Endothelial cell of umbilical vein (primary cell): ENCODE measurements at regions of chr1 and their contacts with region 1.

Region 1: GRCh38 chr1:77126307-77126706 is 92.9 kb downstream of the PIGK start:
- DNase-seq: peak; percentile 72
- H3K4me3 ChIP-seq: no peak overlapping the region
- H3K27ac ChIP-seq: no peak overlapping the region
- H3K4me1 ChIP-seq: no peaks in the 10 kb centered on the region
- H3K27me3 ChIP-seq: no peaks in the 10 kb centered on the region
- CTCF ChIP-seq: peak; percentile 37 to 55
- POLR2A ChIP-seq: no peak

Region 2: DNA sequence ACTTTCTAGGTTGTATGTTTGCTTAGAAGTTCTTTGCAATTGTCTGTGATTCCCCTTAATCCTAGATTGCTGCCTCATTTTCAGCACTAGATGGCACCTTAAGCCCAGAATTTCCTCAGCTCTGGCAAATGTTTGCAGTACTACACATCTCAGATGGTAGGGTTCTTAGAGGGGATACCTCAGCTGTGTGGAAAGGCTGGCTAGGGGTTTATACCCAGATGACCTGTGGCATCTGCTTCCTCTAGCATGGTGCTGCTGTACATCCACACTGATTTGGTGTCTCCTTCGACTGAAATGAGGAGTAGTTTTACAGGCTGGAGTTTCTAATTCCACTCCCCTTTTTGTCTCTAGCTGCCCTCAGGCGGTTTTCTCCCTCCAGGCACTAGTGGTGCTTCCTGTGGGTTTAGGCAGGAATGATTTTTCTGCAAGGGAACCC is 1217.6 kb before region 1 on chr1:
- CTCF ChIA-PET with region 1: interaction called, 17 read pairs
- POLR2A ChIA-PET with region 1: no interaction called
- dilution Hi-C with region 1: no loop called
- intact Hi-C with region 1: loop called (anchors 1 kb)
- DNase-seq: peak; percentile 60
- H3K4me3 ChIP-seq: no peak overlapping the region
- H3K27ac ChIP-seq: no peak overlapping the region
- H3K4me1 ChIP-seq: no peaks in the 10 kb centered on the region
- H3K27me3 ChIP-seq: no peaks in the 10 kb centered on the region
- CTCF ChIP-seq: peak; percentile 30 to 45
- POLR2A ChIP-seq: no peak

Region 3: DNA sequence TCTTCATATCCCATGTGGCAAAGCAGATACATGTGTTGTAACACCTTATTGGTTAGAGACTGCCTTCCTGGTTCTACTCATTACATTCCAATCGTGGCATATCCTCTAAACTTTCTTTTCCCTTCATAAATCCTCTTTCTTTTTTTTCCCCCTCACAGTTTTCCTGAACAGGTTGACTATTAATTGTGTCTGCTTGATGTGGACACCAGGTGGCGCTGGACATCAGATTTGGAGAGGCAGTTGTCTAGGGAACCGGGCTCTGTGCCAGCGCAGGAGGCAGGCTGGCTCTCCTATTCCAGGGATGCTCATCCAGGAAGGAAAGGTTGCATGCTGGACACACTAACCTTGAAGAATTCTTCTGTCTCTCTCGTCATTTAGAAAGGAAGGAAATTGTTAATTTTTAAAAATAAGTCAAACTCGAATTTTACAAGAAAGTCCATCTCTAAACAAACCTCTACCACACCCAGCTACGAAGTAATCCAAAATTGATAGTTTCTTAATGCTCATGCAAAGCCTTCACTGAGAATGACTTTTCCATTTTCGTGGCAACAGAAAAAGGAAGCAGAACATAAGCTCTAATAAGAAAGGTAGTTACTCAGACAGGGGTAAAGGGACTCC is 1134.7 kb before region 1 on chr1:
- CTCF ChIA-PET with region 1: interaction called, 6 read pairs
- POLR2A ChIA-PET with region 1: no interaction called
- dilution Hi-C with region 1: no loop called
- intact Hi-C with region 1: loop called (anchors 1 kb)
- DNase-seq: peak; percentile 81
- H3K4me3 ChIP-seq: no peak overlapping the region
- H3K27ac ChIP-seq: no peak overlapping the region
- H3K4me1 ChIP-seq: no peaks in the 10 kb centered on the region
- H3K27me3 ChIP-seq: peaks cover 2 to 3% of the 10 kb centered on the region in 2 experiments
- CTCF ChIP-seq: peak; percentile 71 to 78
- POLR2A ChIP-seq: no peak

Region 4: DNA sequence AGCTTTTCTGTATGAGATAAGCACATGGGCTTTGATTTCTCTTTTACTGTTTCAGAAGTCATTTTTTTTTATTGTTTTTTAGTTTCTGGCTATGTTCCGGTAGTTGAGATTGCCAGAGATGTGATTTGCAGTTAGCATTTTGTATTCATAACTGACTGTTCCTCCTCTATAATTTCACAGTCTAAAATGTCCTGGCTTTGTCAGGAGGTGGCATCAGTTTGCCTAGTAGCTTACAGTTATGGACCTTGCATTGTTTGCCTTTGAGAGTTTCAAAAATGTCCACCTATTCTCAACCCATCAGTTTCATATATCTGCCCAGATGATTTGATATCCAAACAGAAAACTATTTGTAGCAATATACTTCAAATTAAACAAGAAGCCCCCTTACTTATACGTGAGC is 1091.3 kb before region 1 on chr1:
- CTCF ChIA-PET with region 1: interaction called, 30 read pairs
- POLR2A ChIA-PET with region 1: no interaction called
- dilution Hi-C with region 1: no loop called
- intact Hi-C with region 1: loop called (anchors 5 kb)
- DNase-seq: peak; percentile 26
- H3K4me3 ChIP-seq: no peak overlapping the region
- H3K27ac ChIP-seq: no peak overlapping the region
- H3K4me1 ChIP-seq: no peaks in the 10 kb centered on the region
- H3K27me3 ChIP-seq: peaks cover 0 to 4% of the 10 kb centered on the region in 2 experiments
- CTCF ChIP-seq: peak; percentile 23 to 25
- POLR2A ChIP-seq: no peak

Region 5: DNA sequence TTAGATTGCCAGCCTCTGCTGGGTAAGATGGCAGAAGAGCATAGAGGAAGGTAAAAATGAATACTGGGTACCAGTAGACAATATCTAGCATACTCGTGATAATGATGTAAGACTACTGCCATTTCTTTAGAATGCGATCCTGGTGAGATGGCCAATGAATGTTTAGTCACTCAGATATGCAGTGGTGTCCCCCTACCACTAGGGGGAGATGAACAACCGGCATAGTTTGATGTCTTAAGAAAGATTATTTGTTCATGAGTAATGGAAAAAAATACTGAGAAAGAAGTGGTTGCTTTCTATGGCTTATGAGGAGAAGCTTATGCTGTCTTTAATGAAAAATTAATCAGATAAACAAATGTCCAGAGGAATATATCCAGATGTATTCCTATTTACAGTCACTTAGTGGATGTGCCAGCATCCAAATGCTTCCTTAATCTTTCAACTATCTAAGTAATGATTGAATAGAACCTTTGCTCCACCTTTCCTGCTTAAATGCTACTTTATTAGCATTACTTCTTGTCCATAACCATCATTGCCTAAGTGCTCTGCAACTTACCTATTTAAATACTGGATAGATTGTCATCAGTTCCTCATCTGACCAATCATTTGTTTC is 795.2 kb before region 1 on chr1:
- CTCF ChIA-PET with region 1: interaction called, 4 read pairs
- POLR2A ChIA-PET with region 1: no interaction called
- dilution Hi-C with region 1: no loop called
- intact Hi-C with region 1: loop called (anchors 5 kb)
- DNase-seq: peak; percentile 76
- H3K4me3 ChIP-seq: no peak overlapping the region
- H3K27ac ChIP-seq: no peak overlapping the region
- H3K4me1 ChIP-seq: no peaks in the 10 kb centered on the region
- H3K27me3 ChIP-seq: no peaks in the 10 kb centered on the region
- CTCF ChIP-seq: peak; percentile 81 to 91
- POLR2A ChIP-seq: no peak

Region 6: DNA sequence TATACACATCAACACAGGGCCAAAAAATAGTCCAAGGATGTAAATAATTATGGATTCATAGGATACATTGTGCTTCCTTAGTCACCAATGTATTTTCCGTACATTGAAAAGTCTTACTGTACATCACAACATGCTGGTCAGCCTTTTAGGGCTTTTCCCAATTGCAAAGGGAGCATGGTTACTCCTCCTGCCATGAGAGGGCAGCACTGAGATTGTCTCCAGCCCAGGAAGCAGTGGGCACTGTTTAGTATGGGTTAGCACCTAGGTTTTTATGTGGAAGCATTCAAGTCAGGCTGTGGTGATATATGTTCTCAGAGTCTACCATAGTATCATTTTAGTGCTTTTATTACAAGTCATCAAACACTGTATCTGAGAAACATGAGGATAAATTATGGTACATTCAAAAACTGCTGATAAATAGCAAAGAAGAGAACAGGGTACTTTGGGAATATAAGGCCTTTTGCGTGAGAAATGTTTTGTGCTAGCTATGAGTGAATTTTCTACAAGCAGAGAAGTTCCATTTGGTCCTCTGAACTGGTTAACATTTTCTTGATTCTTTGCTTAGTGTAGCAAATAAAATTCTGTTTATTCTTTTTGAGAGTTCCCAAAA is 225.0 kb before region 1 on chr1:
- CTCF ChIA-PET with region 1: no interaction called
- POLR2A ChIA-PET with region 1: no interaction called
- dilution Hi-C with region 1: no loop called
- intact Hi-C with region 1: loop called (anchors 1 kb)
- DNase-seq: peak; percentile 41
- H3K4me3 ChIP-seq: no peak overlapping the region
- H3K27ac ChIP-seq: no peak overlapping the region
- H3K4me1 ChIP-seq: no peaks in the 10 kb centered on the region
- H3K27me3 ChIP-seq: no peaks in the 10 kb centered on the region
- CTCF ChIP-seq: peak; percentile 58 to 72
- POLR2A ChIP-seq: no peak

Region 7: DNA sequence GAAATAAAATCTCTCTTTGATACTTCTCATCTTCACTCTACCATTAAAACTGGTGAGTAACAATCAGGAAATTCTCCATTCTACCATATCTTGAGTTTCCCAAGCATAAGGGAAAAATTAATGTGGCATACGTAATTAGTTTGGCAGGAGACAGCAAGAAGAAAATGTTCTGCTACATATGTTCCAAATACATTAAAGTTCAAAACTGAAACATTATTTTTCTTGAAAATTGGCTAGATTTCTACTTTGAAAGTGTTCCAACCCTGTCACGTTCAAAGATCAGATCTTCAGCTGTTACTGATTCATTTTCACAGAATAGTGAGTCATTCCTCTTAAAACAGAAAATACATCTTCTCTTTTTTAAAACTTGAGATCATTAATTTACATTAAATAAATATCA is 44.4 kb after region 1 on chr1:
- CTCF ChIA-PET with region 1: no interaction called
- POLR2A ChIA-PET with region 1: no interaction called
- dilution Hi-C with region 1: no loop called
- intact Hi-C with region 1: no loop called
- DNase-seq: no peak
- H3K4me3 ChIP-seq: no peak overlapping the region
- H3K27ac ChIP-seq: no peak overlapping the region
- H3K4me1 ChIP-seq: no peaks in the 10 kb centered on the region
- H3K27me3 ChIP-seq: no peaks in the 10 kb centered on the region
- CTCF ChIP-seq: no peak
- POLR2A ChIP-seq: no peak